Ovary (tissue), 10 donors: ENCODE measurements at regions of chr1 and their contacts with region 1.

Region 1: DNA sequence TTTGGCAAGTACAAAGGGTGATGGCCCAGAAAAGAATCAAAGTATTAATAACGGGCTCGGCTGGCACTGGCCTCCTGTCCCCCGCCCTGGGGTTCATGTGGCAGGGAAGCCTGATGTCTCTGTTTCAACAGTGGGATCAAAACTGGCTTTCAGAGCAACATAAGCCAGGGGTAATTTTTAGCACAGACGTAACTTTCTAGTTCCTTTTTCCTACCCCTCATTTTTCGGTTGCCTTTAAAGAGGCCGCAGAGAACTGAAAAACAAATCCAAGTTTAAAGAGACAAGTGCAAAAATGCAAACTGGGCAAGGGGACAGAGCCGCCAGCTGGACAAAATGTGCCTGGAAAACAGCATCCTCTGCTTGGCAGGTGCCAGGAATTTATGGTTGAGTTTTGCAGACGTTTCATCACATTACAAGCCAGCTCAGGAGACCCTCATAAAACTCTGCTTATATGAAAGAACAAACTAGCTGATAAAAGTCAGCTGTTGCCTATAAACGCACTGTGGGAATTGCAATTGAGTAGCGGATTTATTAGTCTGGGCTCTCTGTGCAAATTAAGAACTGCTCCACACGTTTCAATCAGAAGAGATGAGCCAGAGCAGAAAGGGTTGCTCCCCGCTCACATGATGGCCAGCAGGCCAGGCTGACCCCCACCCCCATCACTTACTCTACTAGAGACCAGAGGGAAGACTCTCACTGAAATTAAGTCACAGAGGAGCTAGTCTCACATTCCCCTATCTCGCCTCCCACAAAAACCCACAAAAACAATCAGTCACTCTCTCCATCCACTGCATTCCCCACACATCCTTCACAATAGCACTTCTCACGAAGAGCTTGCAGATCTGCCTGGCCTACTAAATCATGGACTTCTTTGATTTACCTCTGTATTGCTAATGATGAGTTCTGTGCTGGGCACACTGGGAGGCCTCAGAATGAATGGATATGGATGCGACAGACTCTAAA is 15.8 kb upstream of the CDCA8 start:
- DNase-seq: peak; percentile 30 to 60 (median 31)
- H3K4me3 ChIP-seq: no peak overlapping the region
- H3K27ac ChIP-seq: peak overlapping the region; percentile 4 to 43
- H3K4me1 ChIP-seq: peaks cover 4% of the 10 kb centered on the region
- H3K27me3 ChIP-seq: no peaks in the 10 kb centered on the region
- CTCF ChIP-seq: no peak
- EP300 ChIP-seq: no peak
- POLR2A ChIP-seq: no peak

Region 2: GRCh38 chr1:37595440-37596319 is 80.9 kb before region 1 on chr1 and contains the start of gene GNL2:
- intact Hi-C with region 1: loop called in 3 of 4 experiments (anchors 5 to 10 kb)
- DNase-seq: peak; percentile 95 to 99 (median 98)
- H3K4me3 ChIP-seq: peak within 1 kb of the TSS; percentile 77
- H3K27ac ChIP-seq: peak within 1 kb of the TSS in 1 of 2 donors; percentile 40
- H3K4me1 ChIP-seq: peaks cover 7% of the 10 kb centered on the region
- H3K27me3 ChIP-seq: no peaks in the 10 kb centered on the region
- CTCF ChIP-seq: no peak
- EP300 ChIP-seq: no peak
- POLR2A ChIP-seq: peak; percentile 75
- total RNA-seq, gene GNL2: 26.6 to 43.0 (median 31.7) TPM

Region 3: GRCh38 chr1:37602750-37603694 is 73.5 kb before region 1 on chr1:
- intact Hi-C with region 1: loop called in 3 of 4 experiments (anchors 5 to 10 kb)
- DNase-seq: no peak
- H3K4me3 ChIP-seq: no peak overlapping the region
- H3K27ac ChIP-seq: no peak overlapping the region
- H3K4me1 ChIP-seq: peaks cover 2% of the 10 kb centered on the region
- H3K27me3 ChIP-seq: no peaks in the 10 kb centered on the region
- CTCF ChIP-seq: peak in 1 of 3 donors; percentile 22
- EP300 ChIP-seq: no peak
- POLR2A ChIP-seq: no peak

Region 4: GRCh38 chr1:38191461-38191860 is 514.9 kb after region 1 on chr1:
- intact Hi-C with region 1: no loop called
- DNase-seq: peak in 2 of 5 donors; percentile 38 to 54
- H3K4me3 ChIP-seq: no peak overlapping the region
- H3K27ac ChIP-seq: no peak overlapping the region
- H3K4me1 ChIP-seq: peaks cover 2% of the 10 kb centered on the region
- H3K27me3 ChIP-seq: no peaks in the 10 kb centered on the region
- CTCF ChIP-seq: no peak
- EP300 ChIP-seq: no peak
- POLR2A ChIP-seq: no peak